AG04449 (cell line): ENCODE measurements at regions of chr1 and their contacts with region 1.

Region 1: DNA sequence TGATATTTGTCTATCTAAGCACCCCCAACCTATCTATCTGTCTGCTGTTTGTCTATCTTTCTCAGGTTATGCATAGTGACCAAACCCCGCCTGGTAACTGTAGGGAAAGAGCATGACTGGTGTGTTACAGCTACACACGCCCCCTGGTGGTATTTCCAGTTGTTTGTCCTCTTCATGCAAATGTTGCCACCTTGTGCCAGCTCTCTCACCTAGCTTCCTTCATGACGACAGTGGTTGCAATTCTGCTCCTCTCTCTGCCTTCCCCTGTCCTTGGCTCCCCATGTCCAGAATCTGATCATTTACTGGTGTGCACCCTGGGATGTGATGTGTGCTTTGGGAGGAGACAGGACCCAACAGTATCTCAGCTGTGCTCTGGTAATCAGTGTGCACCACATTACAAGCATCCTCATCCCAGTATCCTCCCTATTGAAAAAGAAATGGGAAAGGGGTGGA is 8.1 kb upstream of the INKA2 start:
- DNase-seq: no peak
- H3K4me3 ChIP-seq: no peak overlapping the region
- CTCF ChIP-seq: peak; percentile 78

Region 2: GRCh38 chr1:111656086-111657017 is 91.0 kb before region 1 on chr1:
- CTCF ChIA-PET with region 1: no interaction called
- POLR2A ChIA-PET with region 1: no interaction called
- DNase-seq: no peak
- H3K4me3 ChIP-seq: no peak overlapping the region
- CTCF ChIP-seq: peak; percentile 37

Region 3: GRCh38 chr1:111762332-111762731 is 15.0 kb after region 1 on chr1:
- CTCF ChIA-PET with region 1: interaction called, 76 read pairs
- POLR2A ChIA-PET with region 1: no interaction called
- DNase-seq: no peak
- H3K4me3 ChIP-seq: no peak overlapping the region
- CTCF ChIP-seq: no peak